Calu3 (cell line): ENCODE measurements at regions of chr5 and their contacts with region 1.

Region 1: GRCh38 chr5:96133341-96134079 is 171.9 kb upstream of the ELL2 start:
- DNase-seq: no peak
- H3K4me3 Mint-ChIP-seq: no peak overlapping the region
- H3K27ac Mint-ChIP-seq: no peak overlapping the region
- H3K4me1 Mint-ChIP-seq: no peaks in the 10 kb centered on the region
- H3K27me3 Mint-ChIP-seq: no peaks in the 10 kb centered on the region
- CTCF ChIP-seq: no peak

Region 2: DNA sequence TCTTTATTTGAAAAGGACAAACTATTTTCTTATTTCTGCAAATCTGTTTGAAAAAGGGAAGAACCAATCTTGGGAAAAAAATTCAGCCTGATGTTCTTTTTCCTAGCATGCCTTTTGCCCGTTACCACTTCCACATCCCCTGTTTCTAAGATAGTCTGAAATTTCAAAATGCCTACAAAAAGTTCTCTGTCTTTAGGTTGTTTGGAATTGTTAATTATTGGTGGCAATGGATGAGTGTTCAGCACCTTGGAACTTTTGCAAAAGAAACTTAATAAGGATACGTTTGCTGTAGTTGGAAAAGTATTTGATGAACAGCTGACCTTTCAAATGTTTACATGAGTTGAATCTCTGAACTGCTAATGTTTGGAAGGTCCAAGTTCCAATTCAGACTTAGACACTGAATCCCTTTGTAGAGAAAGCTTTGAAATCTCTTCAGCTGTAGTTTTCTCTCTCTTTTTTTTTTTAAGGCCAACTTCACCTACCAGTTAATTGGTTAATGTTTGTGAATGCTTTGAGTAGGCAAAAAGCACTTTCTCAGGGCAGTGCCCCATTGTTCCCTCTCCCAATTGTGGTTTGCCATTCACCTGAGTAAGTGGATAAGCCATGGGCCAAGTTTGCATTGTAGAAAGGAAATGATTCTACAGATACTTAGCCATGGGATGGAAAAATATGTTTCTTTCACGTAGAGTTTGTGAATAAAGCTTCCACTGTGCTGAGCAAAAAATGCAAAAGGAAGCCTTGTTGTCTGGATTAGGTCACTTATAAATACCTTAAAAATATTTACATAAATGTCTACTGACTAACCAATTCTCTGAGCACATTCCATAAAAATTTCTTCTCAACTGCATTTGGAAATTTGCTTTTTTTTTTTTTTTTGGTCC is 15.5 kb before region 1 on chr5:
- CTCF ChIA-PET with region 1: no interaction called
- intact Hi-C with region 1: loop called (anchors 2 kb)
- DNase-seq: no peak
- H3K4me3 Mint-ChIP-seq: no peak overlapping the region
- H3K27ac Mint-ChIP-seq: peak overlapping the region; percentile 11
- H3K4me1 Mint-ChIP-seq: peaks cover 28% of the 10 kb centered on the region
- H3K27me3 Mint-ChIP-seq: no peaks in the 10 kb centered on the region
- CTCF ChIP-seq: no peak